Activated naive CD4-positive, alpha-beta T cell treated with anti-CD3 and anti-CD28 coated beads, Interleukin-2, amount 10 ng/mL, durations not matched to agents 7 days and 5 days (primary cell): ENCODE measurements at regions of chr13 and their contacts with region 1.

Region 1: GRCh38 chr13:102800145-102801041 is 1.5 kb downstream of the BIVM start:
- DNase-seq: peak; percentile 90
- H3K4me3 Mint-ChIP-seq: peak overlapping the region; percentile 93
- H3K27ac Mint-ChIP-seq: peak overlapping the region; percentile 82
- H3K4me1 Mint-ChIP-seq: peaks cover 47% of the 10 kb centered on the region
- H3K27me3 Mint-ChIP-seq: peaks cover 9% of the 10 kb centered on the region

Region 2: DNA sequence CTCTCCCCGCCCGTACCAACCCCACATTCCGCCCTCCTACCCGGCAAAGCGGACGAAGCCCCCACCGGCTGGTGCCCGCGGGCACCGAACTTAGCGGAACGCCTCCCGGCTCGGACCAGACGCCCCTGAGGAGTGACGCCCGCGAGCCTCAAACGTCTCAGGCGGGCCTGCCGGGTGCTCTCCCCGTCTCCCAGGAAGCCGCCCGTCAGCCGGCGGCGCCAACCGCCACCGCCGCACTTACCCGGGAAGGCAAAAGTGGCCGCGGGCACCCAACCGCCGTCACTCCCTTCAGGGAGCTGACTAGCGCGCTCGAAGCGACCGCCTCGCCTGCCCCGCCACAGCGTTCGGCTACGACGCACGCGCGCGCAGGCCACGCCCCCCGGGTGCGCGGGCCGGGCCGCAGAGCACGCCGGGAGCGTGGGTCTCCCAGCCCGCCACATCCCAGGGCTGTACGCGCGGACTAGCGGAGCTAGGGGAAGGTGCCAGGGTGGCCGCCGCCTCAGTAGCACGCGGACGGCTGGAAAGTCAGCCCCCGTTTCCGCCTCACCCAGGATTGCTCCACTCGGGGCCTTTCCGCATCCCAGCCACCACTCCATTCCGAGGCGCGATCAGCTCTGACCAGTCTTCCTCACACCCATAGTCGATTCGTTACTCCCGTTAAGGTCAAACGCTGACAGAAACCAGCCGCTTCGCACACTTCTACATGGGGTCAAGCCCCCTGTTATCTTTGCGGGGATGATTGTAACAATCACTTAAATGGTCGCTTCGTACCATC is 26.8 kb before region 1 on chr13 and contains the start of gene TEX30:
- CTCF ChIA-PET with region 1: interaction called, 10 read pairs
- DNase-seq: peak; percentile 88
- H3K4me3 Mint-ChIP-seq: peak within 1 kb of the TSS; percentile 82
- H3K27ac Mint-ChIP-seq: peak within 1 kb of the TSS; percentile 95
- H3K4me1 Mint-ChIP-seq: peaks cover 56% of the 10 kb centered on the region
- H3K27me3 Mint-ChIP-seq: peaks cover 4% of the 10 kb centered on the region

Region 3: GRCh38 chr13:102914339-102914930 is 114.0 kb after region 1 on chr13:
- CTCF ChIA-PET with region 1: no interaction called
- DNase-seq: no peak
- H3K4me3 Mint-ChIP-seq: no peak overlapping the region
- H3K27ac Mint-ChIP-seq: no peak overlapping the region
- H3K4me1 Mint-ChIP-seq: no peaks in the 10 kb centered on the region
- H3K27me3 Mint-ChIP-seq: peaks cover 13% of the 10 kb centered on the region